Ascending aorta (tissue), 2 donors: ENCODE measurements at regions of chr19 and their contacts with region 1.

Region 1: DNA sequence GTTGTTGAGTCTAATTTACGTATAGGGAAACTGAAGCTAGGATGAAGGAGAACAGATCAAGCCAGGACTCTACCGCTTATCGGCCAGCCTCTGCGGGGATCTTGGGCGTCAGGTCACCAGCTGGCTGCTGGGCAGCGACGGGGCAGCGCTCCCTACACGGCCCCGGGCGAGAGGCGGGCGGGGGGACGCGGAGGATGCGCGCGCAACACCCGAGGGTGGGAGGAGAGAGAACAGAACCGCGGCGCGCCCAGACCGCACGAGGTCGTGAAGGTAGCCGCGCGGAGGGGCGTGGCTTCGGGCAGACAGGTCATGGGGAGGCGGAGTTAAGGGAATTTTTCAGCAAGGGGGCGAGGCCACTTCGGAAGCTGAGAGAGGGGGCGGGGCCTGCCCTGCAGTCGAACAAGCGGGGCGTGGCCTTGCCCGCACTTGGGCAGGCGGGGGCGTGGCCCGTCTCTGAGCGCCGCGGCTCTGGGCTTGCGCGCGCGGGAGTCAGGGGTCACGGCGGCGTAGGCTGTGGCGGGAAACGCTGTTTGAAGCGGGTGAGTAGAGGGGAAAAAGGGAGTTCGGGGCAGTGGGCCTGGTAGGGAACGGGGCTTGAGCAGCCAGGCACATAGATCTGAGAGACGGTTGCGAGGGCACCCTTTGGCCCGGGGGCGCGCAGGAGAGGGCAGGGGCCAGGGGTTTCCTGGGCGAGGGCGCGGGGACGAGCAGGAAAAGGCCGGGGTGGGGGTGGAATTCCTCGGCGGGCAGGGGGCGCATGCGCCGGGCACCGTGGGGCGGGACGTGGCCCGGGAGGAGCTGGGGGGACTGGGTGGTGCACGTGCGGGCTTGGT is at the start of gene POLD1:
- DNase-seq: peak; percentile 94 to 99
- H3K4me3 ChIP-seq: peak within 1 kb of the TSS; percentile 61 to 76
- H3K27ac ChIP-seq: peak within 1 kb of the TSS; percentile 87 to 88
- H3K4me1 ChIP-seq: peaks cover 8 to 10% of the 10 kb centered on the region in 2 donors
- H3K27me3 ChIP-seq: no peaks in the 10 kb centered on the region
- CTCF ChIP-seq: no peak
- total RNA-seq, gene POLD1: 22.9 TPM

Region 2: GRCh38 chr19:50431343-50432220 is 47.5 kb after region 1 on chr19:
- intact Hi-C with region 1: loop called (anchors 2 kb)
- DNase-seq: peak; percentile 25 to 89
- H3K4me3 ChIP-seq: peak overlapping the region; percentile 59 to 76
- H3K27ac ChIP-seq: peak overlapping the region; percentile 32 to 44
- H3K4me1 ChIP-seq: peaks cover 10% of the 10 kb centered on the region in 2 donors
- H3K27me3 ChIP-seq: peaks cover 20% of the 10 kb centered on the region
- CTCF ChIP-seq: no peak

Region 3: GRCh38 chr19:50476224-50476942 is 92.3 kb after region 1 on chr19 and contains the starts of genes EMC10 and GARIN5A:
- intact Hi-C with region 1: loop called (anchors 5 kb)
- DNase-seq: peak; percentile 65 to 93
- H3K4me3 ChIP-seq: peak within 1 kb of the TSS; percentile 91 to 96
- H3K27ac ChIP-seq: peak within 1 kb of the TSS; percentile 41 to 55
- H3K4me1 ChIP-seq: peaks cover 8 to 12% of the 10 kb centered on the region in 2 donors
- H3K27me3 ChIP-seq: no peaks in the 10 kb centered on the region
- CTCF ChIP-seq: no peak
- total RNA-seq, gene EMC10: 87.9 TPM
- total RNA-seq, gene GARIN5A: not detected